RWPE1 (cell line): ENCODE measurements at regions of chr1 and their contacts with region 1.

Region 1: DNA sequence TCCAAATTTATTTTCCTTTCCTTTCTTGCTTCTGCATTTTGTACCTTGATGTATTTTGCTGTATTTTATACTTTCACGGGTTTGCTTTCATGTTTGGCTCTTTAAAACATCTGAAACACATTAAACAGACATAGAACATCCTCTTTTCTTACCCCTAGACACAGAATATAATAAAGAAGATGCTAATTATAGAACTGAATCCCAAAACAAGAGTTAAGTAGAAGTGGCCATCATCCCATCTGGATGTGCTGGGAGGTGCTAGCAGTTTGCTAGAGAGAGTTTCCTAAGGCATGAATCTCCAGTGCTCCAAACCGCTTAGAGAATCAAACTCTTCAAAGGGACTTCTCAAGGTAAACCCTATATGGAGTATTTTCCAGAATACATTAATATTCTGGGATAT is 53.9 kb upstream of the GNG12 start:
- DNase-seq: no peak
- H3K27ac ChIP-seq: no peak overlapping the region
- CTCF ChIP-seq: no peak

Region 2: DNA sequence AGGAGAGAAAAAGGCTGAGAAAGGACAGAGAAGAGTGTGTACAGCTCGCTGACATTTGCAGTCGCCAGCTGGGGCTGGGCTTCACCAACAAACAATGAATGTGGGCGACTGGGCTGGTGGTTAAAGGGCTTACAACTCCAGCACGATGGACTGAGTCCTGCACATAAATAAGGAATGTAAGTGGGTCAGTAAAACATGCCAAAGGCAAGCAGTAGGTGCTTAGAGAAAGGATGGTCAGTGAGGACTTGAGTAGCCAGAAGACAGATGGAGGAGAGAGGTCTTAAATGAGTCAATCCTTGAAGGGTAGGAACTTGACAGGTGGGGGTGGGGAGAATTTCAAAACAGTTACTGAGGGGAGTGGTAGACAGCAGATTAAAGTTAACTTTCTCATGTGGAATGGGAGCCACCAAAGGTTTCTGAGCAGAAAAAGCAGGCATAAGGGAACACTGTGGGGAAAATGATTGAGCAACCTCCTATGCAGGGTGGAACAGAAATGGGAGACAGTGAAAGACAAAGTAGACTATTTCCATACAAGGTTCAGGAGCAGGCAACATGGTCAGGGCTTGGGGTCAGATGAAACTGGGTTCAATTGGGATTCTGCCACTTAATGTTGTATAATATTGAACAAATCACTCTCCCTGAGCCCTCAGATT is 164.7 kb before region 1 on chr1:
- CTCF ChIA-PET with region 1: no interaction called
- POLR2A ChIA-PET with region 1: interaction called, 10 read pairs
- DNase-seq: no peak
- H3K27ac ChIP-seq: no peak overlapping the region
- CTCF ChIP-seq: no peak

Region 3: DNA sequence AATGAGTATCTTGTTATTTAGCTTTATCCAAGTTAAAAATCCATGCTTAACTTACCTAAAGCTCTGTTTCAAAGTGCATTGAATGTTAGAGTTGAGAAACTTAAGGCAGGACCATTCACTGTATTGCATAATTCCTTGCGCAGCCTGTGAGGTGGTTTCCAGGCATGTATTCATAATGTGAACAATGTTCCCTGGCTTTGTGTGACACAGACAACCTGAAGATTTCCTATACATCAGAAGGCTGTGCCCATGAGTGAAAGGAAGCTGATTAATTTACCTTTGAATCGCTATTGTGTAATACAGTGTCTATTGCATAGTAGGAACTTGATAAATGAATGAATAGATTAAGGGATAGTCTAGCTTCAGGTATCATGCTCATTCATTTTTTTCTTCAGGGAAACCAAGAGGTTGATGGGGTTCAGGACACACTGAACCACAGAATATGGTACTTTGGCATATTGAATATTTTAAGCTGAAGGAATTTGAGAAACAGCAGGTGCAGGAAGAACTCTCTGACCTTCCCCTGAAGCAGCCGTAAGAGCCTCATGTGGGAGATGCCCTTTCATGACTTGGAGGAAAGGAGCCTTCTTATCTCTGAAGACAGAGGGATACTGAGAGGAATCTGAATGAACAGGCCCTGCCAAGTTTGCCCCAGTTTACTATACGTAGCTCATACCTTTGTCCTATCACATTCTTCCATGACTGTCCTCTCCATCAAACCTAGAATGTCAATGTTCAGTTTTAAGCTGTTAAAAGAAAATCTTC is 34.8 kb after region 1 on chr1:
- CTCF ChIA-PET with region 1: no interaction called
- POLR2A ChIA-PET with region 1: no interaction called
- DNase-seq: peak; percentile 70
- H3K27ac ChIP-seq: no peak overlapping the region
- CTCF ChIP-seq: no peak